CD4-positive, alpha-beta memory T cell (primary cell): ENCODE measurements at regions of chr14 and their contacts with region 1.

Region 1: DNA sequence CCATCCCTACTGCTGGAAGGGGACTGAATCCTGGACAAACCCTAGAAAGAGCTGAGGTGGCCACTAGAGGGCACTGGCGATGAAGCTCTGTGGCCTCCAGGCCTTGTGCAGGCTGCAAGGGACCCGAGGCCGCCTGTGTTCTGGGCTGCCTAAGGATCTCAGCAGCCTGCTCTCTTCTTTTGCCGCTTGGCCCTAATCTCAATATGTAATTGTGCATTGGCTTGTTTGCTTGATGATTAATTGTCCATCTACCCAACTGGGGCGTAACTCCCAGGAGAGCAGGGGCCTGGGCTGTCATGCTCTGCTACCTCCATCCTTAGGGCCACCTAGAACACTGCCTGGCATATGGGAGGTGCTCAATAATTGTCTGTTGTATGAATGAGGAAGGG is 73.8 kb downstream of the SYNE3 start:
- DNase-seq: peak; percentile 61 to 69 (median 66)
- H3K4me3 ChIP-seq: no peak overlapping the region
- H3K4me3 Mint-ChIP-seq: no peak overlapping the region
- H3K27ac ChIP-seq: no peak overlapping the region
- H3K27ac Mint-ChIP-seq: peak overlapping the region in 6 of 7 donors; percentile 23 to 84 (median 64)
- H3K4me1 ChIP-seq: peaks cover 7% of the 10 kb centered on the region
- H3K4me1 Mint-ChIP-seq: peaks cover 3 to 5% (median 5%) of the 10 kb centered on the region in 4 donors
- H3K27me3 ChIP-seq: no peaks in the 10 kb centered on the region
- H3K27me3 Mint-ChIP-seq: no peaks in the 10 kb centered on the region

Region 2: DNA sequence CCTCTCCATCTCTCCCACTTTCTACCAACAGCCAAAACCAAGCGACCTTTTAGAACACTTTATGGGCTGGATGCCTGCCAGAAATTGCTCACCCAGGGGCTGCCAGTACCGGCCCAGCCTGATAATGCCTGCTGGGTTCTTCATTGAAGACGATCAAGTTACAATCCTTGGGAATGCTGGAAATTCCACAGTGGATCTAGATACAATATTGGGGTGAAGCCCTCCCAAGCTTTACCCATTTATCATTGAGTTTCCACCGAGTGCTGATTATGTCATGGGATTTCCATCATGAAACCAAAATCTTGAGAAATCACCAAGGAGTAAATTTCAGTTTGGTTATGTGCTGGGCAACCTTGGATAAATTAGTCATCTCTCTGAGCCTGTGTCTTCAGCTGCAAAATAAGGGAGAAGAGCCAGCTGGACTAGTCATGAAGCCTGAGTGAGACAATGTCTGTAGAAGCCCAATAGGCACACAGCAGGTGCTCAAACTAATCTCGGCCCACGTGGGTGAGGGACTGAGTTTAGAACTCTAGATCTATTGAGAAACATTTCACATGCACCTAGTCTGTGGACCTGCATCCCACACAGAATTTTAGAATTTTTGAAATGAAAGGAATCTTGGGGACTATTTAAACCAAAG is 47.4 kb before region 1 on chr14:
- CTCF ChIA-PET with region 1: no interaction called
- POLR2A ChIA-PET with region 1: no interaction called
- intact Hi-C with region 1: no loop called
- DNase-seq: no peak
- H3K4me3 ChIP-seq: no peak overlapping the region
- H3K4me3 Mint-ChIP-seq: no peak overlapping the region
- H3K27ac ChIP-seq: no peak overlapping the region
- H3K27ac Mint-ChIP-seq: no peak overlapping the region
- H3K4me1 ChIP-seq: no peaks in the 10 kb centered on the region
- H3K4me1 Mint-ChIP-seq: no peaks in the 10 kb centered on the region
- H3K27me3 ChIP-seq: no peaks in the 10 kb centered on the region
- H3K27me3 Mint-ChIP-seq: peaks cover 0 to 5% of the 10 kb centered on the region in 2 donors

Region 3: GRCh38 chr14:95424529-95424928 is 18.1 kb before region 1 on chr14:
- CTCF ChIA-PET with region 1: interaction called, 18 read pairs
- POLR2A ChIA-PET with region 1: no interaction called
- intact Hi-C with region 1: no loop called
- DNase-seq: no peak
- H3K4me3 ChIP-seq: no peak overlapping the region
- H3K4me3 Mint-ChIP-seq: no peak overlapping the region
- H3K27ac ChIP-seq: no peak overlapping the region
- H3K27ac Mint-ChIP-seq: no peak overlapping the region
- H3K4me1 ChIP-seq: no peaks in the 10 kb centered on the region
- H3K4me1 Mint-ChIP-seq: peaks cover 0 to 2% (median under 1%) of the 10 kb centered on the region in 4 donors
- H3K27me3 ChIP-seq: no peaks in the 10 kb centered on the region
- H3K27me3 Mint-ChIP-seq: no peaks in the 10 kb centered on the region

Region 4: DNA sequence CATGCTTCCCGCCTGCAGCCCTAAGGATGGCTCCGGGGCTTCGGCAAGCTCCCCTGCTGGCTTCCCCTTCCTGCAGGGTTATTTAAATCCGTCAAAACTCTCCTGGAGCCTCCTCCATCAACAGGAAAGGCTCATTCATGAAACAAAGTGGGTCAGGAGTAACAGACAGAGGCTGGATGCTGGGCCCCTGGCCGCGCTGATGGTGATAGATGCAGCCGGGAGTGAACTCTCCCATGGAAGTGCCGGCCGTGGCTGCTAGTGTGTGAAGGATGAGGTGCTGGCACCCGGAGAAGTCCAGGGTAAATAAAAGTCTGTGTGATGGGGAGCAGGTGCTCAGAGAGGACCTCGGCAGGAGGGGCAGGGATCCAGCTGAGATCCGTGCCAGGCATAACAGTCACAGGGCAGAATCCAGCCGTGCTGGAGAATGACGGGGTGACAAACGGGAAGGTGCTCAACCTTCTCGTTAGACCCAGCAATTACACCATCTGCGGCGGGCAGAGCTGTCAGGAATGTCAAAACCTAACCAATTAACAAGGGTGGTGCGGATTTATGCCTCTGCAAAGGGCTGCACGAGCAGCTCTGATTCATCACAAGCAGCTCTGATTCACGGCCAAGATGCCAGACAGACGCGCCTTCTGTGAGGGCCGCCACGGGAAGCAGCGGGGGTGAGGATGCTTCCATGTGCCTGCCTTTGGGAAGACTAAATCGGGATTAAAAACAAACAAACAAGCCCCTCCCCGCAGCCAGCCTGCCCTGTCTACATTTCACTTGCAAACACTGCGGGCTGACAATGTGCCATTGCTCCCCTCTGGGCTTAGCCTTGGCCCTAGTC is 18.2 kb after region 1 on chr14:
- CTCF ChIA-PET with region 1: interaction called, 107 read pairs
- POLR2A ChIA-PET with region 1: interaction called, 23 read pairs
- intact Hi-C with region 1: loop called (anchors 2 kb)
- DNase-seq: no peak
- H3K4me3 ChIP-seq: no peak overlapping the region
- H3K4me3 Mint-ChIP-seq: no peak overlapping the region
- H3K27ac ChIP-seq: peak overlapping the region; percentile 53
- H3K27ac Mint-ChIP-seq: peak overlapping the region; percentile 96 to 98 (median 97)
- H3K4me1 ChIP-seq: peaks cover 66% of the 10 kb centered on the region
- H3K4me1 Mint-ChIP-seq: peaks cover 42 to 71% (median 59%) of the 10 kb centered on the region in 4 donors
- H3K27me3 ChIP-seq: no peaks in the 10 kb centered on the region
- H3K27me3 Mint-ChIP-seq: no peaks in the 10 kb centered on the region

Region 5: DNA sequence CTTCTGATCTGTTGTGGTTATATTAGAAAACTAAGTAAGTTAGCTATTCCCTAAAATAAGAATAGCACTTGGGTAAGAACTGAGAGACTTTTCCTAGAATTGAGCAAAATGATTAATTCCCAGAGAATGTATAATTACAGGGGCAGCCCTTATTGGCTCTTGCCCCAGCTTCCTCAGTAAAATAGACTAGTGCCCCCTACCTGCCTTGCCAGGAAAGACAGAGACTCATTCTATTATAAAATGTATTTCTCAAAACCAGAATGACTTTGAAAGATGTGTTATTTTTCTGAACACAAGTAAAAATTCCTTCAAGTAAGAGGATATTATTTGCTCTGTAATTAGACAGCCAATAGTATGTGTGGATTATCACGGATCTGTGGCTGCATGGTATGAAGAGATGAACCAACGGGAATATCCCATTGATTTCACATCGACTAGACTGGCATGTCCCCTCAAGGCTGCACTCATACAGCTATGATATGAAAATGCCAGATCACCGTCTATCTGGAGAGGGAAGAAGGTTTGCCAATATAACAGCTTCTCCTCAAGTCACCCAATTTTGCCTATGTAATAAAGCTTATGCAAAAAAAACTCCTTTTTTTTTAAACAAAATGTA is 84.9 kb after region 1 on chr14:
- CTCF ChIA-PET with region 1: interaction called, 845 read pairs
- POLR2A ChIA-PET with region 1: interaction called, 37 read pairs
- intact Hi-C with region 1: loop called (anchors 1 kb)
- DNase-seq: peak; percentile 43 to 57 (median 52)
- H3K4me3 ChIP-seq: no peak overlapping the region
- H3K4me3 Mint-ChIP-seq: peak overlapping the region in 1 of 8 donors; percentile 52
- H3K27ac ChIP-seq: no peak overlapping the region
- H3K27ac Mint-ChIP-seq: peak overlapping the region; percentile 38 to 90 (median 66)
- H3K4me1 ChIP-seq: peaks cover 65% of the 10 kb centered on the region
- H3K4me1 Mint-ChIP-seq: peaks cover 51 to 80% (median 66%) of the 10 kb centered on the region in 4 donors
- H3K27me3 ChIP-seq: no peaks in the 10 kb centered on the region
- H3K27me3 Mint-ChIP-seq: no peaks in the 10 kb centered on the region

Region 6: GRCh38 chr14:95545179-95546168 is 102.8 kb after region 1 on chr14:
- CTCF ChIA-PET with region 1: interaction called, 845 read pairs
- POLR2A ChIA-PET with region 1: no interaction called
- intact Hi-C with region 1: no loop called
- DNase-seq: no peak
- H3K4me3 ChIP-seq: no peak overlapping the region
- H3K4me3 Mint-ChIP-seq: no peak overlapping the region
- H3K27ac ChIP-seq: no peak overlapping the region
- H3K27ac Mint-ChIP-seq: no peak overlapping the region
- H3K4me1 ChIP-seq: peaks cover 5% of the 10 kb centered on the region
- H3K4me1 Mint-ChIP-seq: peaks cover 0 to 15% (median 2%) of the 10 kb centered on the region in 4 donors
- H3K27me3 ChIP-seq: no peaks in the 10 kb centered on the region
- H3K27me3 Mint-ChIP-seq: no peaks in the 10 kb centered on the region

Region 7: DNA sequence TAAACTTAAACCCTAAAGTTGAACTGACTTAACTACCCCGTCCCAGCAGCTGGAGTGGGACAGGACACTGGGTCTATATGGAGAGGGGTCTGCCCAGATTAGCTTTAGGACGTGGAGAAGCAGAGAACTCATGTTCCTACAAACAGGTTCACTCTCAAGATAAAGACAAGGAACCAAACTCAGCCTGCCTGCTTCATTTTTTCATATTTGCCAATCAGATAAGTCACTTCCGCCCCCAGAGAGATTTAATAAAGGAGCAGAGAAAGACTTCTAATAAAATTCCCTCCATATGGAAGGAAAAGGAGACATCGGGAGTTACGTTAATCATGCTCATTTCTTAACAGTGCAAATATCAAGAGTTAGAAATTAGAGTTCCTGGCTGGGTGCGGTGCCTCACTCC is 313.5 kb after region 1 on chr14:
- CTCF ChIA-PET with region 1: no interaction called
- POLR2A ChIA-PET with region 1: no interaction called
- intact Hi-C with region 1: no loop called
- DNase-seq: no peak
- H3K4me3 ChIP-seq: no peak overlapping the region
- H3K4me3 Mint-ChIP-seq: no peak overlapping the region
- H3K27ac ChIP-seq: no peak overlapping the region
- H3K27ac Mint-ChIP-seq: no peak overlapping the region
- H3K4me1 ChIP-seq: no peaks in the 10 kb centered on the region
- H3K4me1 Mint-ChIP-seq: no peaks in the 10 kb centered on the region
- H3K27me3 ChIP-seq: no peaks in the 10 kb centered on the region
- H3K27me3 Mint-ChIP-seq: peaks cover 22 to 29% of the 10 kb centered on the region in 2 donors

Region 8: DNA sequence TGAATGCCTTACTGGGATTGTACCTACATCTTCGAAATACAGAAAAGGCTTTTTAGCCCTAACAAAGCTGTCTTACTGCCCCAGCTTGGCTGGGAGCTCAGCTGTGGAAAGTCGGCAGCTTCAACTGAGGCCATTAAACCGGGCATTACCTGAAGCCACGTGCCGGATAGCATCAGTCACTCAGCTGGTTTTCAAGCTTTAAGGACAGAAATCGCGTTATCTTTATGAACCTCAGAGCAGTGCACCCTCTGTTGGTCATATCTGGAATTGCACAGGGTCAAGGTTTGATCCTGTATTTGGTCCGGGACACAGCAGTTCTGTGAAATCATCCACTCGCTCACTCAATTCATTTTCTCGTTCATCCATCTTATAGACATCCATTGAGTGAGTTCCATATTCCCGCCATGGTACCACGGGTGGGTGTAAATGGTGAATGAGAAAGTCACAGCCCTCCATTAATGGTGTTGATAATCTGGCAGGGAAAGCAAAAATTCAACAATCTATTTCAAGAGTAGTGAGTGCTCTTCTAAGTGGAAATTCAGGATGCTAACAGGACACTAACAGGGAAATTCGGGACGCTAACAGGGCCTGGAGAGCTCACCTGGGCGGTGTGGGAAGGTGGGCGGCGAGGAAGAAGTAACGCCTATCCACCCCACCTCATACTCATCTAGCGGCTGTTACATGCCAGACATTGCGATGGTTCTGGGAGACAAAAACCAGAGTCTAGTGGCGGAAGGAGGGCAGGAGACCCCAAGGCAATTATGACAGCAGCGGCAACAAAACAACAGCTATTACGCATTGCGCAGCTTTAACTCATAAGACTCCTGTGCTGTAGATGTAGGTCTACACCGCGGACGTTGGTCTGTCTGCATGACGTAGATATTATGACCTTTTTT is 331.9 kb after region 1 on chr14:
- CTCF ChIA-PET with region 1: interaction called, 4 read pairs
- POLR2A ChIA-PET with region 1: no interaction called
- intact Hi-C with region 1: loop called (anchors 5 kb)
- DNase-seq: peak in 4 of 5 donors; percentile 26 to 37 (median 28)
- H3K4me3 ChIP-seq: no peak overlapping the region
- H3K4me3 Mint-ChIP-seq: no peak overlapping the region
- H3K27ac ChIP-seq: no peak overlapping the region
- H3K27ac Mint-ChIP-seq: no peak overlapping the region
- H3K4me1 ChIP-seq: no peaks in the 10 kb centered on the region
- H3K4me1 Mint-ChIP-seq: peaks cover 0 to 2% (median under 1%) of the 10 kb centered on the region in 4 donors
- H3K27me3 ChIP-seq: no peaks in the 10 kb centered on the region
- H3K27me3 Mint-ChIP-seq: peaks cover 5 to 14% of the 10 kb centered on the region in 2 donors